ENCODE measurements at regions of chr6 and their contacts with region 1.

Region 1: DNA sequence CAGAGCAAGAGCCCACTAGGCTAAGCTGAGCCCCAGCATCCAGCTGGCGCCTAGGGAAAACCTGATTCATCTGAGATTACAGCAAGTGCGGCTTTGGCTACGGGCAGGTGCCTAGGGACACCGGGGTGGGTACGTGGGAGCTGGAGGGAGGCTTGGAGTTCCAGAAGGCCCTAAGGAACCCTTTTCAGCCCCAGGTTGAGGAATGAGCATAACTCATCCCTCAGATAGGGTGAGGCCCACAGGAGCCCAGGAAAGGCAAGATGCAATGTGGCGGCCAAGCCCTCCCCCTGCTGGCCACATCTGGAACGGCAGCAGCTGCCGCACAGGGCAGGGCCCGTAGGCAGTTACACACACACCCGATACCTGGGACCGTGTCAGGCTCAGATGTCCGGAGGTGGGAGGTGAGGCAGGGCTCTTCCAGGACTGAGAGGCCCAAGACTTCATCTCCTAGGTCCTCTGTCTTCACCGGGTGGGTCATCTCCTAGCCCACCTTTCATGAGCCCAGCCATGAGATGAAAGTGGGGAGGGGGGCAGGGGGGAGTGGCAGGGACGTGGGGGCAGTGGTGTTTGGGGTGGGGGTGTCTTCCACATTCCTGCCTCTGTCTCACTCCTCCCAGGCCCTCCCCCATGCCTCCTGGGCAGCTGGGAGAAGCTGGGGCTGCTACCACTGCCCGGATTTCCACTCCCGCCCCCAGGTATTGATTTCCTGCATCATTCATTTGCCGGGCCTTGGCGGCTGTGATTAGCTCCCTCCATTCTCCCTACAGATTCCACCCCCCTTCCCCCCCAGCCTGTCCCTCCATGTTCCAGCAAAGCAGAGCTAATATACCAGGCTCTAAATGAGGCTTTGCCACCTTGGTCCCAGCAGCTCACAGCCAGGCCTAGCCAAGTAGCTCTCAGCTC is 5.5 kb downstream of the MDGA1 start:
- DNase-seq: no peak
- H3K4me3 ChIP-seq: no peak overlapping the region
- CTCF ChIP-seq: peak; percentile 99

Region 2: GRCh38 chr6:37365762-37366161 is 326.4 kb before region 1 on chr6:
- CTCF ChIA-PET with region 1: interaction called, 17 read pairs
- POLR2A ChIA-PET with region 1: no interaction called
- DNase-seq: no peak
- H3K4me3 ChIP-seq: no peak overlapping the region
- CTCF ChIP-seq: peak; percentile 8

Region 3: GRCh38 chr6:37473397-37474095 is 218.6 kb before region 1 on chr6:
- CTCF ChIA-PET with region 1: interaction called, 10 read pairs
- POLR2A ChIA-PET with region 1: no interaction called
- DNase-seq: no peak
- H3K4me3 ChIP-seq: no peak overlapping the region
- CTCF ChIP-seq: no peak

Region 4: DNA sequence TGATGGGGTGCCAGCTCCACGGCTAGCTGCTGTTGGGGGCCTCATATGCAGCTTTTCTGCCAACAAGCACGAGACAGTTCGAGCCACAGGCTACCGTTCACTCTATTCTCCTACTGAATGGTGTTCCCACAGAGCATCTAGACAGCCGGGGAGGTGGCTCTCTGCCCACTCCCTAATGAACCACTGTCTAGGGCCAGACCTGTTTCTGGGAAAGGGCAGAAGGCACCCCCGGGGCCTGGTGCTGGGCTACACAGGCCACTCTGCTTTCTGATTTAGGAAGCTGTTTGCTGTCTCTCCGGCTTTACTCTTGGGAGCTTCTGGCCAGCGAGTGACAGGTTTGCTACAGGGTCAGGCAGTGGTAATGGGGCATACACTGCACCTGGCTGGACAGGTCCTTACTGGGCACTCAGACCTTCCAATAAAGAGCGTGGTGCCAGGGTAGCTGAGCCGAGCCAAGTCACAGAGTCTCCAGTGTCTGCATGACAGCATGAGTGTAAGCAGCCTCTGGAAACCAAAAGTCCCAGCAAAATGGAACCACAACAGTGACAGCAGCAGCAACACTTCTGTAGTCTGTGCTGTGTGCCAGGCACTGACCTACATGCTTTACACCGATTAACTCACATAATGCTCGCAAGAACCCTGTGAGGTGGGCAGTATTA is 200.9 kb before region 1 on chr6:
- CTCF ChIA-PET with region 1: interaction called, 91 read pairs
- POLR2A ChIA-PET with region 1: no interaction called
- DNase-seq: no peak
- H3K4me3 ChIP-seq: no peak overlapping the region
- CTCF ChIP-seq: no peak

Region 5: DNA sequence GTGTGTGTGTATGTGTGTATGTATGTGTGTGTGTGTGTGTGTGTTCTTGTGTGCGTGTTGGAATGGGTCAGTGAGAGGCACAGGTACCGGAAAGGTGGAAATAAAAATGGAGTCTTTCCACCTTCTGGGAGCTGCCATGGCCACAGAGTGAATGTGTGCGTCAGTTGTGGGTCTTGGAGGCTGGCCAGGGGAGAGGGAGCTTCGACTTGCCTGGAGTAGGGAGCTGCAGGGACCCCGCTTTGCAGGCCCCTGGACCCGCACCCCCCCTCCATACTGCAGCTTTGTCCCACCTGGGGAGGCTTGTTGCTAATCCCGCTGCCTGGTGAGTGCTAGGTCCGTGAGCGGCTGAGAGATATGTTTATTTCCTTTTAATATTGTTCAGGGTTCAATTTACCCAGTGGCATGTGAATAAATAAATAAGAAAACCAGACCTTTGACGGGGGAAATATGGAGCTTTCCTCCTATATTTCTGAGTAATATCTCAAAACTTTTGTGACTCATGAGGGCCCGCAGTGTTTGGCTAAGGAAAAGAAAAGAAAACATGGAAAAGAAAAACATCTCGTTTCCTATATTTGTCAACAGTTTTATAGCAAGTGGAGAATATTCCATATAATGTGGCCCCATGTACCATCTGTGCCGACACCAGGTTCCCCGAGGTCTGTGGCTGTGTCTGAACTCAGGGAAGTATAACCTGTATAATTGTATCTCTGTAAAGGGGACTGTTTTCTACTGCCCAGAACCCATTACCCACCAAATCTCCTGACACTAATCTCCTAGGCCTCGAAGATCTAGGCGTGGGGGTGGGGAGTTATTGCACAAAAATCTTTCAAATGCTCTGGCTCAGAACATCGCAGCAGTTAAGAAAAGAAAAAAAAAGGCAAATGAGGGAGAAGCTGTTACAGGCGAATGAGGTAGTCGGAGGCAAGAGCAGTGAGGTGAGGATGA is 167.9 kb before region 1 on chr6:
- CTCF ChIA-PET with region 1: no interaction called
- POLR2A ChIA-PET with region 1: no interaction called
- DNase-seq: no peak
- H3K4me3 ChIP-seq: no peak overlapping the region
- CTCF ChIP-seq: no peak

Region 6: DNA sequence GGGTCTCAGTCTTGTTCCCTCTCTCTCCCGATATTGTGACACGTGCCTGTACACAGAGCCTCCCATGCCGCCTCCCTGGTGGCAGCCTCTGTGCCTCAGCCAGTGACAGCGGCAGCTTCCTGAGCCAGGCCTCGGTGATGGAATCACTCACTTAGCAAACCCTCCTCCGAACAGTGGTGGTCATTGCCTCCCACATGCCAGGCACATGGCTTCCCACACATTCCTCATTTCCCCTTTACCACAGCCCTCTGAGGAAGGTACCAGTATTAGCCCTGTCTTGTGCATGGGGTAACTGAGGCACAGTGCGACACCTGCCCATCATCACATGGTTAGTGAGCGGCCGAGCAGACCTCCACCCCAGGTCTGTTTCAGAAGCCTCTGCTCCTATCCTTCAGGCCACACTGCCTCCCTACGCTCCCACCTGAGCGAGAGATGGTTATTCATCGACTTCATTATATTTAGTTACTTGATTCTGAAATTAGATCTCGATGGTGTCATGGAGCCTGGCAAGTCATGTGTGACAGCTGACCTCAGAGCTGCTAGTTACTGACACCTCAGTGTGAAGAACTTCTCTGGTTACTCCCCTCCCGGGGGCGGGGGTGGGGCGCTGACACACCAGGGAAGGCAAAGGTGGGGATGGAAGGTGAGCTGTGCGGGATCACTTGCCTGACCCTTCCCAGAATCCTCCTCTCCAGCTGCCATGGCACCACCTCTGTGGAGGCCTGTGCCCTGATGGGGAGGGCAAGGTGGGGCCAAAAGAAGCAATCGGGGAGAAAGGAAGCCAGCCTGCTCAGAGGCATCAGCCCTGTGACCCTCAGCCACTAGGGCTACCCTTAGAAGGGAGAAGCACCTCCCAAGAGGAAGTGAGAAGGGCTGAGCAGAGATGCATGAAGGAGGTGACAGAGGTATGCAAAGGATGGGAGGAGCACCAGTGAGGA is 12.3 kb before region 1 on chr6:
- CTCF ChIA-PET with region 1: interaction called, 26 read pairs
- POLR2A ChIA-PET with region 1: no interaction called
- DNase-seq: no peak
- H3K4me3 ChIP-seq: no peak overlapping the region
- CTCF ChIP-seq: no peak

Region 7: GRCh38 chr6:37731888-37732287 is 39.7 kb after region 1 on chr6:
- CTCF ChIA-PET with region 1: no interaction called
- POLR2A ChIA-PET with region 1: no interaction called
- DNase-seq: no peak
- H3K4me3 ChIP-seq: no peak overlapping the region
- CTCF ChIP-seq: no peak

Region 8: DNA sequence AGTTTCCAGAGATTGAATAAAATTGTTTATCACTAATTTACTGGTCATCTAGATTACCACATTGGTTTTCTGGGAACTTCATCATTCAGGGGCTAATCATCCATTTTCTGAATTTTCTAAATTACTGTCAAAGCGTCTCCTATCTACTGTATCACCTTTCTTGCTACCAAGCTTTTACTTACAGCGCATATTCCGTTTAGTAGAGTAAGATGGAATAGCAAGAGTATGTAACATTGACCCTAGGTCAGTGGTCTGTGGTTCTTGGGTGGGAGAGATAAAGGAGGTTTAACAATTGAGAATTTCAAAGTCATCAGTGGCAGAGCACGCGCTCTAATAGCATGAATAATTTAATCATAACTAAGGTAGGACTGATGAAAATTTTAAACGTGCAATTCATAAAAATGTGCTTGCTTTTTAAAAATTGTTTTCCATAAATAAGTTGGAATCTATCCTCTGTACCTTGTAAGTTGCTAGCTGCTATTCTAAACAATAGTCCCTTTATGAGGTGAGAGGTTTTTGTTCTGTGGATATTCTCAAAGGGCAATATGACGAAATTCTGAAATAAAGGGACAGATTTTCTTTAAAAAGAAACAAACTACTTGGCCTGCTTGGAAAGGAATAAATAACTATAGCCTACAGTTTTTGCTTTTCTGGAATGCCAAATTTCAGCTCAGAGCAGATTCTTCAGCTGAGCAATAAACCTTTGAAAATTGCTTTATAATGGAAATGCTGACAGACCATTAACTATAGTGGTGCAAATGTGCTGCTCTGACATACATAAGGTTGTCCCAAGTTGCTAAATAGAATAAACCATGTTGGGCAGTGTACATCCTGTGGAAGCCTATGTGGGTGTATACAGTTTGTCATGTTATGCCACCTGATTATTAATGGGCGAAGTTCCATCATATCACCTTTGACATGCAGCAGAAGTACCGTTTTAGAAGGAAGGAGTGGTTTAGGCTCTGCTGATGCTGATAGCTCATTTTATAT is 211.5 kb after region 1 on chr6:
- CTCF ChIA-PET with region 1: no interaction called
- POLR2A ChIA-PET with region 1: no interaction called
- DNase-seq: no peak
- H3K4me3 ChIP-seq: no peak overlapping the region
- CTCF ChIP-seq: no peak

Measured in AG04449 (cell line).